ENCODE measurements at regions of chr4 and their contacts with region 1.

Region 1: DNA sequence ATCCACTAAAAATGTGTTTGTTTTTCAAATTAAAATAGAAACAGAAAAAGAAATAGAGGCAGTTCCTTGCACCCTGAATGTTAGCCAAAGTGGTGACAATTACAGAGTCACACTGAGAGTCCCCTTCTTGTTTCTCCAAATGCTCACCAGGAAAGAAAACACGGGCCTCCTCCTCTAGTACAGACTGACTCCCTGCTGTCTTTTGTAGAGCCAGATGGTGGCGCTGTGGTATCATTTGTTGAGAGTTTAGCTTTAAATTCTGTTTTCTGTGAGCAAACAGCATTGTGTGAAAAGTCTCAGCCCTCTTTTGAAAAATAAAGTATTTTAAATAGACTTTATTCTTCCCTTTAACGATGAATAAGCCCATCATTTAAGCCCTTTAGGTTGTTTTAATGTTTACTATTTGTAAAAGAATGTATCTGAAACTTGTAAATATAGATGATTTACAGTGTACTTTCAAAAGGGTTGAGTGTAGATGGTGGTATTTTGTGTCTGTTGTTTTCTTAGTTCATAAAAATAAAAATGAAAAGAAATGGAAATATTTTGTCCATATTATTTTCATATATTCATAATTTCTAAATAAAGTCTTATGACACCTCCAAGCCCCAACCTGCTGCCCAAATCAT is 36.9 kb upstream of the ATOH1 start:
- DNase-seq: peak; percentile 77
- H3K4me3 ChIP-seq: no peak overlapping the region
- H3K27ac ChIP-seq: no peak overlapping the region
- H3K4me1 ChIP-seq: no peaks in the 10 kb centered on the region
- H3K27me3 ChIP-seq: no peaks in the 10 kb centered on the region
- CTCF ChIP-seq: peak; percentile 52 to 78 (median 77)
- POLR2A ChIP-seq: no peak

Region 2: DNA sequence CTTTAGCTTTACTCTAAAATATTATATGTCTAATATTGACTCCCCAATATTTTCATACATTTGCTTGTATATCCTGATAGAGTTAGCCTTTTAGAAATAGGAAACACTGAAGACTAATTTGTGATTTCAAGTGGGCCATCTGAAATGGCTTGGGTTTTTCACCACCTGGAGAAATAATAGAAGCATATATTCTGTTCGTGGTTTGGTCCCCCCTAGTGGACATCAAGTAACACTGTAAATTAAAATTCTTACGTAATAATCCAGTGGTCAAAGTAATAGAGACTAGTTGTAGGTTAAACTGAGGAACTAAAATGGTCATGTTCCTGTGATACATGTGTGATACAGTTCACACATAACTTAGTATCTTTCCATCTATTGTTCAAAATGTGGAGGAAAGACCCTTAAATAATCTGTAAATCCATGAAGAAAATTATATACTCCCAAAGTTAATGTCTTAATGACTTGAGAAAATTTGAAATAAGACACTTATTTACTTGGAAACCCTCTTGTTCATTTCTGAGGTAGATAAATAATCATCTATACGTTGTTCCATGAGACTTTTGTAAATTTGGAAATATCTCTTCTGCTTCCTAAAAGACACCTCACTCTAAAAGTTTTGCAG is 336.1 kb after region 1 on chr4:
- intact Hi-C with region 1: loop called (anchors 10 kb)
- DNase-seq: no peak
- H3K4me3 ChIP-seq: no peak overlapping the region
- H3K27ac ChIP-seq: no peak overlapping the region
- H3K4me1 ChIP-seq: no peaks in the 10 kb centered on the region
- H3K27me3 ChIP-seq: no peaks in the 10 kb centered on the region
- CTCF ChIP-seq: peak; percentile 39 to 58 (median 47)
- POLR2A ChIP-seq: no peak